ENCODE measurements at regions of chr7 and their contacts with region 1.

Region 1: GRCh38 chr7:130896898-130897514 is 163.0 kb upstream of the KLF14 start:
- DNase-seq: peak; percentile 85
- H3K4me3 ChIP-seq: no peak overlapping the region
- H3K27ac ChIP-seq: peak overlapping the region; percentile 95
- H3K4me1 ChIP-seq: peaks cover 29% of the 10 kb centered on the region
- H3K27me3 ChIP-seq: no peaks in the 10 kb centered on the region
- CTCF ChIP-seq: peak; percentile 80

Region 2: DNA sequence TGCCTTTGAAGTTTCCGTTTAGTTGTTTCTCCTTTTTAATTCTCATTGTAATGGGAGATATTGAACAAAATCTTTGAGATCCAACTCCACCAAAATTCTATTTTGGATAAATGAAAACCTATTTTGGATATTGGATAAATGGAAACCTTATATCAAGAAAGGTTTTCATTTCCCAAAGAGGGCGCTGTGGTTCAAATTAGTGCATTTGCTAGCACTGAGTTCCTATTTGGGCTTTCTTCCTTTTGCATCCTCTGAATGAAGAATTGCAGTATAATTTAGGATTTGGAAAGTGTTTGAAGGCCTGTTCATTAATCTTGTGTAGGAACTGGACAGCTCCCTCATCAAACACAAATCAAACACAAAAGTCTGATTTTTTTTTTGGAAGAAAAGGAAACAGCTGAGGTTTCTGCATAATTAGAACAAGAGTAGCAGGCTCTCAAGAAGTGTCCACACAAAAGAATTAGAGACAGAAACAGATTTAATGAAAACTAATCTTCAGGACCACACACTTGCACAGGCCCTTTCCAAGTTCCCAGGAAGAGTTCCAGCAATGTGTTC is 82.1 kb before region 1 on chr7:
- intact Hi-C with region 1: no loop called
- DNase-seq: no peak
- H3K4me3 ChIP-seq: no peak overlapping the region
- H3K27ac ChIP-seq: no peak overlapping the region
- H3K4me1 ChIP-seq: no peaks in the 10 kb centered on the region
- H3K27me3 ChIP-seq: no peaks in the 10 kb centered on the region
- CTCF ChIP-seq: no peak

Region 3: DNA sequence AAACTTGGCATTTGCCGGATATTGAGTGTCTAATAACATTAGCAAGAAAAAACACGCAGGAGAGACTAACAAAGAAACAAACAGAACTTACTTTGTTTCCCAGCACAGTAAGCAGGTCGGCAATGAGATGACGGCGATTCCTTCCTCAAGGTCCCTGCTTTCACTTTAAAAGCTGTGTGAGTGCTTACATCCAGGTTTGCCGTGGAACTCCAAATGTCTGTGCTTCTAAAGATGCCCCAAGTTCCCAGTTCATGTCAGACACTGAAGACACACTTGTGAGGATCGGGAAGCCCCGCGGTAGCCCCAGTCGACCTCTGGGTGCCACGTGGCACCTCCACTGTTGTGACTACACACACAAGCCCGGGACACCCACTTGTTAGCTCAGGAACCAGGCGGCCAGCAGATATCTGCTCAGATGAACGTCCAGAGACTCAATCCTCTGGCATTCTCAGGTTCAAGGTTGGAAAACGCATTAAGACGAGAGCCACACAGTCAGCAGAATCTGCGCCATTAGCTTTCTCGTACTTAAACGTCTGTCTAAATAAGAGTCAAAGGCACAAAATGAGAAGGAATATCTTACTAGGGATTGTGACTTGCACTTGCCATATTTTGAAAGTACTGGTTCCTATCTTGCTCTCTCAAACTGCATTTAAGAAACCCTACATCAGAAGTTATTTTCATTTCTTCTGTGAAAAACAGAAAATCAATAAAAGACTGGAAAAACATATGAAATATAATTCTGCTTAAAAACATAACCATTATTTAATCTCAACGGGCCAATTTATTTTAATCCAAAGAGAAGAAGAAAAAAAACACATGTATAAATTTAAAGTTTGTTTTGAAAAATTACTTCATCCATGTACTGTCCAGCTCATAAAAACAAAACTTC is 44.6 kb after region 1 on chr7:
- intact Hi-C with region 1: loop called (anchors 5 kb)
- DNase-seq: peak; percentile 75
- H3K4me3 ChIP-seq: peak overlapping the region; percentile 35
- H3K27ac ChIP-seq: peak overlapping the region; percentile 85
- H3K4me1 ChIP-seq: peaks cover 5% of the 10 kb centered on the region
- H3K27me3 ChIP-seq: no peaks in the 10 kb centered on the region
- CTCF ChIP-seq: no peak

Region 4: DNA sequence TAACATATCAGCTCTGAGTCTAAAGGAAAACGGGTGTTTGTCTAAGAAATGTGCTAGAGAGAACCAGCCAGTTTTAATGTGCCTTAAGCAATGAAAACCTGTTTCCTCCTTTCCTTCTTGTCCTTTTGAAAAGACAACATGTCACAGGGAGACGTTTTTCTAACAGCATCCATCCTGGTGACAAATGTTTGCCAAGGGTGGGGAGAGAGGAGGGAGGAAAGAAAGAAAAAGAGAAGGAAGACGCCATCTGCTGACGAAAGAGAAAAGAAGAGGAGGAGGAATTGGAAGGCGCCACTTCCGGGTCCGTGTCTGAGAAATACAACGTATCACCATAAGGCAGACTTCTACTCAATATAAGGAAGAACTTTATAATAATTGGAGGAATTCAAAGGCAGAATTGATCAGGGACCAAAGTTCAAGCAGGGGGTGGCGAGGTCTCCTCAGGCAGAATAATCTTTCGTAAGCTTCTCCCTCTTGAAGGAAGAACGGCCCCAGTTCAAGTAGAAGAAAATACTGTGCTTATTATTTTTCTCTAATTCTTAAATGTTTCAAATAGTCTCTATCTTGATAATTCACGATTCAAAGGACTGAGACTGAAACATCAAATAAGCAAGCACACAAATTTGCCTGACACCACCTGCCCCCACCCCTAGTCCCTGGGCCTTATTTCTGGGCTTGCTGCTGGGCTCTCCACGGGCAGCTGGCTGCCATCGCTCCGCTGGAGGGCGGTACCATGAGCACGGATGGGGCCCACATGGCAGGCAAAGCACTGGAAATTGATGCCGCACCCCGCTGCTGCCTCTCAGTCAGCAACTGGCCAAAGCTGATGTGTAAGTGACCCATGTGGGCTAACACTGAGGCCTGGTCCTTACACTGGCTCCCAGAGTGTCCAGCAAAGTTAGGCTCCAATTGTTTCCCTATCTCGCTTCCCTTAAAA is 110.7 kb after region 1 on chr7:
- intact Hi-C with region 1: loop called (anchors 5 kb)
- DNase-seq: peak; percentile 86
- H3K4me3 ChIP-seq: no peak overlapping the region
- H3K27ac ChIP-seq: peak overlapping the region; percentile 54
- H3K4me1 ChIP-seq: peaks cover 20% of the 10 kb centered on the region
- H3K27me3 ChIP-seq: no peaks in the 10 kb centered on the region
- CTCF ChIP-seq: no peak

Region 5: DNA sequence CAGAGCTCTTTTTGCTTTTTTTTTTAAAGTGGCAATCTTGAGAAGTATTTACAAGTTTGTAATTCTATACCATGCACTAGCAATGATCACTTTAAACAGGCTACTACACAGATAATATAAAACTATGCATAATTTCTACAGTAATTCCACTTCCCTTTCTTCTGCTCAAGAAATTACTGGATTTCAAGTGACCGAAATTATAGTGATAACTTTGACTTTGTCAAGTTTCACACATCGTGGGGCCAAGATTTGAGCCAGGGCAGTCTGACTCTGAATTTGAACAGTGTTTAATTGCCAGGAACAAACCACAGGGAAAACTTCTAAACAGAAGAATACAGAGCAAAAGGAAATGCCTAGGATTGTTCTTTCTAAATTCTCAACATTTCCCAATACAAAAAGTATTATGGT is 142.4 kb after region 1 on chr7:
- intact Hi-C with region 1: loop called (anchors 5 kb)
- DNase-seq: no peak
- H3K4me3 ChIP-seq: no peak overlapping the region
- H3K27ac ChIP-seq: peak overlapping the region; percentile 49
- H3K4me1 ChIP-seq: peaks cover 3% of the 10 kb centered on the region
- H3K27me3 ChIP-seq: no peaks in the 10 kb centered on the region
- CTCF ChIP-seq: no peak

Measured in colonic mucosa (tissue), 4 donors.